Activated CD4-positive, alpha-beta T cell treated with anti-CD3 and anti-CD28 coated beads, Interleukin-2, amount 10 ng/mL, durations not matched to agents 24 days and 14 days (primary cell): ENCODE measurements at regions of chr3 and their contacts with region 1.

Region 1: DNA sequence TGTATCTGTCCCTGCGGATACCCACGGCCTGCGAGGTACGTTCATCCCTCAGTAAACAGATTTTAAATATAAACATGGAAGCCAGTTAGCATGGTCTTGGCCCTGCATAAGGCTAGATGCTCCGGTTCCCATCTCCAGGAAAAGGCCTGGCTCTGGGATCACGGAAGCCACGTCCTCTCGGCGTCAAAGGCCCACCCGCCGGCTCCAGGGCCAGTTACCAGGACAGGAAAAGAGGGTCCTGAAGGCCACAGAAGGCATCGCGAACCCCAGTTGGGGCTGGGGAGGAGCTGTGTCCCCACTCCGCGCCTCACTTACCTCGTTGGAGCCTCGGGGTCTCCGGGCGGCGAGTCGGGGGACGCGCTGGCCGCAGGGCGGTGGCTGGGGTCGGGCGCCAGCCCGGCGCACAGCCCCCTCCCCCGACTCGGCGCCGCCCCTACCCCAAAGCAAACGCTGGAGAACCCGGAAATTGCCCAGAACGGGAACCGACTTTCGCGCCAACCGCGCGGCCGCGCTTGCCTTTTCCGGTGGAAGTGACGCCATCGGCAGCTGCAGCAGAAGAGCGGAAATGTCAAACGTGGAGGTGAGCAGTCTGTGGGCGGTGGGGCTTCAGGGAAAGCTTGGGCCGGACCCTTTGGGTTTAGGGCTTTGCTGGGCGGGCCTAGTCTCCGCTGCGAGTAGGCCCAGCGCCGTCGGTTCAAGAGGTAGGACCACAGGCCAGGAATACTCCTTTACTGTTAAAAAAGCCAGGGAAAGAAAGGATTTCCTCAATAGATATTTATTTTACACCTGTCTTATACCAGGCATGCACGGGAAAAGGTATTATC is at the start of gene TOPBP1:
- DNase-seq: peak; percentile 98
- H3K4me3 Mint-ChIP-seq: peak within 1 kb of the TSS; percentile 86
- H3K27ac Mint-ChIP-seq: peak within 1 kb of the TSS; percentile 94
- H3K4me1 Mint-ChIP-seq: peaks cover 26% of the 10 kb centered on the region
- H3K27me3 Mint-ChIP-seq: no peaks in the 10 kb centered on the region
- total RNA-seq, gene TOPBP1: 92.6 and 97.9 TPM in 2 replicates

Region 2: DNA sequence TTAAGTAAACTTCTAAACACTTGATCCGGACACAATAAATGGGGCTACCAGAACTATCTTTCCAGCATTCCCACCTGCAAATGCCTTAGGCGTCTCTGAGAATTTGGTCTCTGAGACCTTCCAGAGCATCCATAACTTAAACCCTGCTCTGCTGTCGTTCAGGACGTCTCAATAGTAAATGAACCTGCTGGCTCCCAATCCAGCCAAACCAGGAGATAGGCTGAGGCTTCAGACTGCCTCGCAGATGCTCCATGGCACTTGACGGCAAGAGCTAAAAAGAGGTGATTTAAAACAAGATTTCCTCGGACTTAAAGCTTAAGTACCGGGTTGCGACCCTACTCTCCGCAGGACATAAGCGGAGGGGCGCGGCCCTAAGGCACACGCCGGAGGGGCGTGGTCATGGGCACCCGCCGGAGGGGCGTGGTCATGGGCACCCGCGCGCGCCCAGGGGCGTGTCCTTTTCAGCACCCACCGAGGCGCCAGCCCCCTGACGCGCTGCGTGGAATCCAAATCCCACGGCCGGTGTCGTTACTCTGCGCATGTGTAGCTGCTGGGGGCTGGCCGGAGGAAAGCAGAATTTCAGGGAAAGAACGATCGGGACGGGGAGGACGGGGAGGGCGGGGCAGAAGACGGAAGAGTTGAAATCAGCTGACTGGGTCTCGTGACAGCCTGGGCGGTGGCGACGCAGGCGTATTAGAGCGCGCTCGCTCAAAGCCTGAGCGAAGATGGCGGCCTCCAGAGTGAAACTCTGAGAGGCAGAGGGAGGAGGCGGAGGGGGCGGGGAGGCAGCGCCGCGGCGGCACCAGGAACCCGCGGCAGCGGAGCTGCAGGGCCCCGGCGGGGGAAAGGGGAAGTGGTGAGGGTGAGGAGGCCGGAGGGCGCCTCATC is 1244.6 kb before region 1 on chr3 and contains the start of gene DNAJC13:
- intact Hi-C with region 1: loop called (anchors 2 kb)
- DNase-seq: peak; percentile 97
- H3K4me3 Mint-ChIP-seq: peak within 1 kb of the TSS; percentile 98
- H3K27ac Mint-ChIP-seq: peak within 1 kb of the TSS; percentile 95
- H3K4me1 Mint-ChIP-seq: peaks cover 25% of the 10 kb centered on the region
- H3K27me3 Mint-ChIP-seq: peaks cover 3% of the 10 kb centered on the region
- total RNA-seq, gene DNAJC13: 33.6 and 34.0 TPM in 2 replicates

Region 3: DNA sequence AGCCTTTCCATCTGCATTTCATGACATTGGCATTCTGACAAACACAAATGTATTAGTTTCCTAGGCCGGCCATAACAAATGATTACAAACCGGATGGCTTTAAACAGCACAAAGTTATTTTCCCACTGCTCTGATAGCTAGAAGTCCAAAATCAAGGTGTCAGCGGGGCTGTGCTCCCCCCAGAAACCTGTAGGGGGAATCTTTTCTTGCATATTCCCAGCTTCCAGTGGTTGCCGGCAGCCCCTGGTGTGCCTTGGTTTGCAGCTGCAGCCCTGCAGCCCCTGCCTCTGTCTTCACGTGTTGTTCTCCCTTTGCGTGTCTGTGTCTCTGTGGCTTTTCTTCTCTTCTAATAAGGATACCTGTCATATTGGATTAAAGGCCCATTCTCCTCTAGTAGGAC is 167.2 kb before region 1 on chr3:
- intact Hi-C with region 1: loop called (anchors 5 kb)
- DNase-seq: no peak
- H3K4me3 Mint-ChIP-seq: no peak overlapping the region
- H3K27ac Mint-ChIP-seq: no peak overlapping the region
- H3K4me1 Mint-ChIP-seq: peaks cover 33% of the 10 kb centered on the region
- H3K27me3 Mint-ChIP-seq: no peaks in the 10 kb centered on the region

Region 4: DNA sequence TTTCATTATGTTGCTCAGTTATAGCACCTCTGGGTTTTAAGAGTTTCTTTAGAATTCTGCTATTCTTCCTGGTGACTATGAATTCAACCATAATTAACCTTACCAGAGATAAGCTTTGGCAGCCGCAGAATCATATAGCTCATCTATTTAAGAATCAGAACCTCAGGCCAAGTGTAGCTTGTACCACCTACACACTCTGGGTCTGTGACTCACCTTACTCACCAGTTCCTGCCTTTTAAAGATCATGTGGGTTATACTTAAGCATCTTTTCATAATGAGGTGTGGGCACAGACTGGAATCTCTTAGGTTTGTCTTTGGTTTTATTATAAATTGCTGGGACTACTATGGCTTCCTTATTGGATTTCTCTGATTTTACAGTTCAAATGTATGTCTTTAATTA is 66.3 kb before region 1 on chr3:
- intact Hi-C with region 1: loop called (anchors 5 kb)
- DNase-seq: no peak
- H3K4me3 Mint-ChIP-seq: no peak overlapping the region
- H3K27ac Mint-ChIP-seq: peak overlapping the region; percentile 59
- H3K4me1 Mint-ChIP-seq: peaks cover 20% of the 10 kb centered on the region
- H3K27me3 Mint-ChIP-seq: no peaks in the 10 kb centered on the region

Region 5: GRCh38 chr3:133880287-133880686 is 218.6 kb after region 1 on chr3:
- intact Hi-C with region 1: no loop called
- DNase-seq: no peak
- H3K4me3 Mint-ChIP-seq: no peak overlapping the region
- H3K27ac Mint-ChIP-seq: no peak overlapping the region
- H3K4me1 Mint-ChIP-seq: peaks cover 5% of the 10 kb centered on the region
- H3K27me3 Mint-ChIP-seq: peaks cover 19% of the 10 kb centered on the region

Region 6: GRCh38 chr3:133927540-133928066 is 265.9 kb after region 1 on chr3:
- intact Hi-C with region 1: loop called (anchors 1 kb)
- DNase-seq: peak; percentile 92
- H3K4me3 Mint-ChIP-seq: peak overlapping the region; percentile 64
- H3K27ac Mint-ChIP-seq: no peak overlapping the region
- H3K4me1 Mint-ChIP-seq: peaks cover 5% of the 10 kb centered on the region
- H3K27me3 Mint-ChIP-seq: peaks cover 33% of the 10 kb centered on the region

Region 7: DNA sequence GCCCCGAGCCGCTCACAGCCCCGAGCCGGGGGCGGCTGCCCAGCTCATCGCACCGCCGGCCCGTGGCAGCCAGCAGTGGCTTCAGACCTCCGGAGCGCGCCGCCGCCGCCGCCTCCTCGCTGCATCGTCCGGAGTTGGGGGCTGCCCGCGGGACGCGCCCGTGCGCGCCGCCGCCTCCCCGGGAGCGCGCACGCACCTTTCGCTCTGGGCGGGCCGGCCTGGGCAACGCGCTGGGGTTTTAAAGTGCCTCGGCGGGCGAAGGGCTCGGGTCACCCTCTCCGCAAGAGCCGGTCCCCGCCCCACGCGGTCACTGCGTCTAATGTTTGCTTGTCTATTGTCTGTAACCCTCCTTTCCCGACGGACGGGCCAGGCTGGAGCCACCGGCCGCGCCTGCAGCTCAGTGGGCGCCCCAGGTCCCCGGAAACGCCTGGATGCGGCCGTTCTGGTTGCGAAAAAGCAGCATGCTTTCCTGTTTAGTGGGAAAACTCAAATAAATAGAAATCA is 589.1 kb after region 1 on chr3 and contains the start of gene RYK:
- intact Hi-C with region 1: loop called (anchors 10 kb)
- DNase-seq: peak; percentile 93
- H3K4me3 Mint-ChIP-seq: peak within 1 kb of the TSS; percentile 90
- H3K27ac Mint-ChIP-seq: peak within 1 kb of the TSS; percentile 93
- H3K4me1 Mint-ChIP-seq: peaks cover 29% of the 10 kb centered on the region
- H3K27me3 Mint-ChIP-seq: peaks cover 50% of the 10 kb centered on the region
- total RNA-seq, gene RYK: 17.2 and 19.9 TPM in 2 replicates

Region 8: DNA sequence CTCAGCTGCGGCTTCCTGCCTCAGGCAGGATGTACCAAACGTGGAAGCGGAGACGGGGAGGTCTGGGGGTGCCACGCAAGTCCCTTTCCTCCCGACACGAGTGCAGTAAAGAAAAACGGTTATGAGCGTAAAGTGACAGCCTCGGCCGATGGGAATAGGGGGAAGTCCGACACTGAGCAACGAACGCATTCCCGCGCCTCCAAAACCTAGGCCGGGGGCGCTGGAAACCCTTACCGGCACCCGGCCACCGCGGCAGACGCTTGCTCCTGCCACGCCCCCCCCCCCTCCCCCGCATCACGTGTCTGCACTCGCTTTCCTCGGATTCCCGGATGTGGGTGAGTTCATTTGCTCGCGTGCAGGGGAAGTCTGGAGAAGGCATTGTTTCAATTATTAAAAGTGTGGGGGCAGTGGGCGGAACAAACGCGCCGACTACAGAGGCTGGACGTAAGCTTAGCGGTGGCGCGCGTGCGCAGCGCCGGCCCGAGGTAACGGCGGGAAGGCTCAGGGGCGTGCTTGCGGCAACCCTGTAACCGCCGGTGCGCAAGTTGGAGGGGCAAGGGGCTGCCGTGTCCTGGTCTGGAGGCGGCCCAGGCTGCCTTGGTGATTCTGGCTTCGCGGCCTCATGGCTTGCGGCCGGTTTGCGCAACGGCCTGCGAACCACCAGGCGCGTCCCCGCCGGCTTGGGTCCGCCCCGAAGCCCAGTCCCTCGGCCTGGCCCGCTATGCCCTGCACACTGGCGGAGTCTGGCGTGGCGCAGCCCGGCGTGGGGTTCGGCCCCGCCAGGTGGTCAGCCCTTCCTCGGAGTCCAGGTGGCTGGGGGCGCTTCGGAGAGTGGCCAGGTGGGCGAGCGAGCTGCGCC is 824.3 kb after region 1 on chr3 and contains the starts of genes ANAPC13 and CEP63:
- intact Hi-C with region 1: loop called (anchors 5 kb)
- DNase-seq: peak; percentile 97
- H3K4me3 Mint-ChIP-seq: peak within 1 kb of the TSS; percentile 85
- H3K27ac Mint-ChIP-seq: peak within 1 kb of the TSS; percentile 98
- H3K4me1 Mint-ChIP-seq: peaks cover 38% of the 10 kb centered on the region
- H3K27me3 Mint-ChIP-seq: no peaks in the 10 kb centered on the region
- total RNA-seq, gene ANAPC13: 29.7 and 30.0 TPM in 2 replicates
- total RNA-seq, gene CEP63: 18.6 and 20.5 TPM in 2 replicates